WTC11 (cell line): ENCODE measurements at regions of chr7 and their contacts with region 1.

Region 1: GRCh38 chr7:146090023-146090645 is 26.5 kb upstream of the CNTNAP2 start:
- DNase-seq: no peak
- ATAC-seq: peak; percentile 73
- H3K4me3 Mint-ChIP-seq: no peak overlapping the region
- H3K27ac Mint-ChIP-seq: no peak overlapping the region
- H3K4me1 Mint-ChIP-seq: no peaks in the 10 kb centered on the region
- H3K27me3 Mint-ChIP-seq: no peaks in the 10 kb centered on the region
- CTCF ChIP-seq: peak; percentile 76

Region 2: GRCh38 chr7:145848691-145849090 is 241.4 kb before region 1 on chr7:
- CTCF ChIA-PET with region 1: interaction called, 10 read pairs
- POLR2A ChIA-PET with region 1: no interaction called
- DNase-seq: peak; percentile 63
- ATAC-seq: peak; percentile 93
- H3K4me3 Mint-ChIP-seq: no peak overlapping the region
- H3K27ac Mint-ChIP-seq: no peak overlapping the region
- H3K4me1 Mint-ChIP-seq: peaks cover 25% of the 10 kb centered on the region
- H3K27me3 Mint-ChIP-seq: no peaks in the 10 kb centered on the region
- CTCF ChIP-seq: peak; percentile 50

Region 3: DNA sequence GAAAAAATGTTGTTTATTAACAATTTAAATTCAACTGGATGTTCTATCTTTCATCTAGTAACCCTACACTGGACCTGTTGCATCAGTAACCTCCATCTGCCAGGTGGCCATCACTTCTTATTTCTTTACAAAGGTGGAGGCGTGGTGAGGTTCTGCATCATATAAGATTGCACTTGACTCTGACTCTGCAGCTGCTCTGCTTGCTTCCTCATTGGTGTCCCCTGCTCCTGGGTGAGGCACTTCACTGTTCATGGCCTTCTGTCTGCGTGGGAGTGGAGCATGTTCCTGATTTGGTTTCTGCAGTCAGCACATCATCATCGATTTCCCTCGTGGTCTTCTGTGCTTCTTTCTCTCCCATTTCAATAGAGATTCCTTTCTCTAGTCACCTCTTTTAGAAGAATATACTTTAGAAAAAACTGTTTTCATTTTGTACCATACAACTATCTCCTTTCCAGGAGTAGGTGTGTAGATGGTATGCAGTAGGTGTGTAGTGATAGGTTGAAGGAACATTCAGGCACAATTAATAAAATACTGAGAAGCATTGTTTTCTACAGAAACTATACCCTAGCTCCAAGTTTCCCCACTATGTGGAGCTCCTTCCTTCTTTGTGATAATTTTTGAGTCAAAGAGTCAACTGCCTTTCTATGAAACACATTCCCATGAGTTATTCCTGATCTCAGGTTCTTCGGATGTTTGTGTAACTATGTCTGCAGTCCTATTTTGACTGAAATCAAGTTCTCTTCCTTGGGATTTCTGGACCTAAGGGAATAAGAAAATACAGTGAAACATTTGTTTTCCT is 205.2 kb before region 1 on chr7:
- CTCF ChIA-PET with region 1: interaction called, 14 read pairs
- POLR2A ChIA-PET with region 1: no interaction called
- DNase-seq: no peak
- ATAC-seq: no peak
- H3K4me3 Mint-ChIP-seq: no peak overlapping the region
- H3K27ac Mint-ChIP-seq: no peak overlapping the region
- H3K4me1 Mint-ChIP-seq: no peaks in the 10 kb centered on the region
- H3K27me3 Mint-ChIP-seq: no peaks in the 10 kb centered on the region
- CTCF ChIP-seq: no peak